ENCODE measurements at regions of chr16 and their contacts with region 1.

Region 1: GRCh38 chr16:9612267-9612666 is 520.8 kb downstream of the HAPSTR1 start:
- DNase-seq: no peak
- ATAC-seq: no peak

Region 2: GRCh38 chr16:9570521-9570920 is 41.7 kb before region 1 on chr16:
- intact Hi-C with region 1: loop called in 1 of 2 experiments (anchors 5 kb)
- DNase-seq: no peak
- ATAC-seq: no peak

Region 3: GRCh38 chr16:9713156-9713555 is 100.9 kb after region 1 on chr16:
- intact Hi-C with region 1: no loop called
- DNase-seq: no peak
- ATAC-seq: no peak

Region 4: GRCh38 chr16:10218490-10219206 is 606.4 kb after region 1 on chr16:
- intact Hi-C with region 1: no loop called
- DNase-seq: no peak
- ATAC-seq: peak in 1 of 2 donors; percentile 15

Measured in left cardiac atrium (tissue), 4 donors.